ENCODE measurements at regions of chr2 and their contacts with region 1.

Region 1: DNA sequence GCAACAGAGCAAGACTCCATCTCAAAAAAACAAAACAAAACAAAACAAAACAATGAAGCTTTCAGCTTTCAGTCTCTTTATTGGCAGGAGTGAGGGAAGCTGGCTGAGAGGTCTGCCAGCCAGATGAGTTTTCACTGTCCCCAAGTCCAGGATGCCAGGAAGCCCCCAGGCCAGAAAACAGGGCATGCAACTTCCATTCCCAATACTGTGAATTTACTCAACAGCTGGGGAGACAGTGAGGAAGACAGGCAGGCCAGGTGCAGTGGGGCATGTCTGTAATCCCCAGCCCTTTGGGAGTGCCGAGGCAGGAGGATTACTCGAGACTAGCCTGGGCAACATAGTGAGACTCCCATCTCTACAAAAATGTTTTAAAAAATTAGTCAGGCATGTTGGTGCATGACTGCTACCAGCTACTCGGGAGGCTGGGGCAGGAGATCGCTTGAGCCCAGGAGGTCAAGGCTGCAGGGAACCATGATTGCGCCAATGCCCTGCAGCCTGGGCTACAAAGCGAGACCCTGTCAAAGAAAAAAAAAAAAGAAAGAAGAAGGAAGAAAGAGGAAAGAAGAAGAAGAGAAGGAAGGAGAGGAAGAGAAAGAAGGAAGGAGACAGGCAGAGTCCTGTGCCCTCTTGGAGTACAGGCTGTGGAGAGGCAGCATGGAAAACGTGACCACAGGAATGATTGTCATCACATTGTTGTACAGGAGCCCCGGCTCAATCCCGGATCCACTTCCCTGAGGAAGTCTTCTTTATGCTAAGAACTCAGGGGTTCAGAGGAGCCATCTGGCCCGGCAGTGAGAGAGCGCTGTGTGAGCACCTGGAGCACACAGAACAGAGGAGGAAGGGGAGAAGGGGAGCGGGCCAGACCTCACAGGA is 29.2 kb upstream of the POMC start:
- DNase-seq: no peak
- H3K4me3 ChIP-seq: no peak overlapping the region
- H3K27ac ChIP-seq: no peak overlapping the region
- H3K4me1 ChIP-seq: no peaks in the 10 kb centered on the region
- H3K27me3 ChIP-seq: no peaks in the 10 kb centered on the region
- CTCF ChIP-seq: no peak
- EP300 ChIP-seq: no peak
- POLR2A ChIP-seq: no peak

Region 2: DNA sequence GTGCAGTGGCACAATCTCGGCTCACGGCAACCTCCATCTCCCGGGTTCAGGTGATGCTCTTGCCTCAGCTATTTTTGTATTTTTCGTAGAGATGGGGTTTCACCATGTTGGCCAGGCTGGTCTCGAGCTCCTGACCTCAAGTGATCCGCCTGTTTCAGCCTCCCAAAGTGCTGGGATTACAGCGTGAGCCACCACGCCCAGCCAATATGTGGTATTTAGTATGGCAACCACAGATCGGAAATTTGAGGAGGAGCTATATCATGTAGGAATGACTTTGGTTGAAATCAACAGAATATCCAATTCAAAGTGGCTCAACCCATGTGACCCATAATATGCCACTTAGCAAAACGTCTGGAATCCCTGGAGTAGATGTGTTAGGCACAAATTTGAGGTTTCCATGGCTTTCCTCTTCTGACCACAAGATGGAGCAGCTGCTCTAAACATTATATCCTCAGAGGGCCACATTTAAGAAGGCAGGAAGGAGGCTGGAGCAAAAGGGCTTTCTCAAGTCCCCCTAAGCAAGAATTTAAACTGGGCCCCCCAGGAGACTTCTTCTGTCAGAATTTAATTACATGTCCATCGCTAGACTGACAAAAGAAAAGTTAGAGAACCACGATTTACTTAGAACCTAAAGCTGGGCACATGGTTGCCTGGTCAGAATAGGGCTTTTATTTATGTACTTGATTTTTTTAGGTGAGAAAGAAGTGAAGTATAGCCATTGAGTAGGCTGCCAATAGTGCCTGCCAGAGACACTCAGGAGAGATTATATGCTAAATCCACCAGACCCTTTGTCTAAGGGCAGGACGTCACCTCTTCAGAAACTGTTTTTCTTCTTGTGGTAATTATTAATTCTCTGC is 787.6 kb before region 1 on chr2:
- intact Hi-C with region 1: loop called in 1 of 4 experiments (anchors 10 kb)
- DNase-seq: peak in 1 of 5 donors; percentile 59
- H3K4me3 ChIP-seq: no peak overlapping the region
- H3K27ac ChIP-seq: no peak overlapping the region
- H3K4me1 ChIP-seq: no peaks in the 10 kb centered on the region
- H3K27me3 ChIP-seq: no peaks in the 10 kb centered on the region
- CTCF ChIP-seq: peak; percentile 46 to 84 (median 78)
- EP300 ChIP-seq: no peak
- POLR2A ChIP-seq: no peak

Region 3: GRCh38 chr2:24827321-24828237 is 370.0 kb before region 1 on chr2:
- intact Hi-C with region 1: loop called in 1 of 4 experiments (anchors 10 kb)
- DNase-seq: peak; percentile 78 to 89 (median 83)
- H3K4me3 ChIP-seq: no peak overlapping the region
- H3K27ac ChIP-seq: no peak overlapping the region
- H3K4me1 ChIP-seq: no peaks in the 10 kb centered on the region
- H3K27me3 ChIP-seq: no peaks in the 10 kb centered on the region
- CTCF ChIP-seq: peak; percentile 81 to 85 (median 83)
- EP300 ChIP-seq: no peak
- POLR2A ChIP-seq: no peak

Region 4: GRCh38 chr2:24971536-24972314 is 225.8 kb before region 1 on chr2 and contains the start of gene DNAJC27:
- intact Hi-C with region 1: loop called in 1 of 4 experiments (anchors 10 kb)
- DNase-seq: peak; percentile 98 to 99 (median 99)
- H3K4me3 ChIP-seq: peak within 1 kb of the TSS; percentile 85
- H3K27ac ChIP-seq: peak within 1 kb of the TSS; percentile 95 to 99
- H3K4me1 ChIP-seq: peaks cover 6% of the 10 kb centered on the region
- H3K27me3 ChIP-seq: no peaks in the 10 kb centered on the region
- CTCF ChIP-seq: peak in 2 of 3 donors; percentile 7 to 22
- EP300 ChIP-seq: peak; percentile 87
- POLR2A ChIP-seq: peak; percentile 97
- total RNA-seq, gene DNAJC27: 10.2 to 17.6 (median 13.5) TPM

Region 5: GRCh38 chr2:25088817-25089516 is 108.6 kb before region 1 on chr2:
- intact Hi-C with region 1: no loop called
- DNase-seq: no peak
- H3K4me3 ChIP-seq: no peak overlapping the region
- H3K27ac ChIP-seq: no peak overlapping the region
- H3K4me1 ChIP-seq: no peaks in the 10 kb centered on the region
- H3K27me3 ChIP-seq: no peaks in the 10 kb centered on the region
- CTCF ChIP-seq: no peak
- EP300 ChIP-seq: no peak
- POLR2A ChIP-seq: no peak

Measured in ovary (tissue), 10 donors.